Right ventricle myocardium inferior (tissue), 1 donor: ENCODE measurements at regions of chr3 and their contacts with region 1.

Region 1: GRCh38 chr3:39011191-39011736 is 40.5 kb downstream of the SCN11A start:
- DNase-seq: no peak
- ATAC-seq: no peak

Region 2: DNA sequence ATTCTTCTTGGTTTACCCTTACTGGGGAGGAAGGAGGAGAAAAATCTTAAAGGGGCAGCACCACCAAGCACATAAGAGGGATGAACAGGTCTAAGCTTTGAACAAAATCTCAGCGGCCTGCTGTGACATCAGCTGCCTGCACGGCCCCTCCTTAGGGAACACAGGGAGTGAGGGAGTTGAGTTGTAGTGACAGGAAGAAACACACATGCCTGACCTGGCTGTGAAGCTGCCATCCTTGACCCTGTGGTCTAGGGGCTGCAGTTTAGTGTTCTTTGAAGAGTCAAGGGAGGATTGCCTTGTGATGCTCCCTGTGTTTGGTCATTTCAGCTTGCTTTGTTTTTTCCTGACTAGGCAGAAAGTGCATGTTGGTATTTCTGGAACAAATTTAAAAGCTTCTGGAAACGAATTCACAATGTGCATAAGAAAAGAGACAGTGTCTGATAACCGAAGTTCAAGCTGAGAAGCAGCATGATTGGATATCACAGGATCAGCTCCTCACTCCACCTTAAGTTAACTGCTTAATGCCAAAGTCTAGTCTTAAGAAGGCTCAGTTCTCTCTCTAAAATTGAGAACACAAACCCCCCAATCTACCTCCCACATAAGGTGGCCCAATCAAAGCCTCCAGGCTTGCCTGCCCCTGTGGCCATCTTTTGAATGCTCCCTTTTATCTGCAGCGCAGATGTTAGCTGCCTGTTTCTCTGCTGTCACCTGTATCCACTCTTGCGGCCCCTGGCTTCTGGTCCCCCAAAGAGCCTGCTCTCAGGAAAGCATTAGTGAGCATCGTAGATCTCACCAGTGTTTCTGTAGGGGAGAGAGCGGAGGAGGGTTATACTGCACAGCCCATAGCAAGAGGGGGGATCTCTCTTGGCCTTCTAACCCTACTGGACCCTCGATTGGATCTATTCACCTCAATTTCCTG is 41.7 kb before region 1 on chr3:
- intact Hi-C with region 1: loop called (anchors 2 kb)
- DNase-seq: no peak
- ATAC-seq: peak; percentile 8

Region 3: GRCh38 chr3:39267631-39268548 is 256.6 kb after region 1 on chr3:
- intact Hi-C with region 1: no loop called
- DNase-seq: no peak
- ATAC-seq: no peak